GM10248 (cell line): ENCODE measurements at regions of chr12 and their contacts with region 1.

Region 1: DNA sequence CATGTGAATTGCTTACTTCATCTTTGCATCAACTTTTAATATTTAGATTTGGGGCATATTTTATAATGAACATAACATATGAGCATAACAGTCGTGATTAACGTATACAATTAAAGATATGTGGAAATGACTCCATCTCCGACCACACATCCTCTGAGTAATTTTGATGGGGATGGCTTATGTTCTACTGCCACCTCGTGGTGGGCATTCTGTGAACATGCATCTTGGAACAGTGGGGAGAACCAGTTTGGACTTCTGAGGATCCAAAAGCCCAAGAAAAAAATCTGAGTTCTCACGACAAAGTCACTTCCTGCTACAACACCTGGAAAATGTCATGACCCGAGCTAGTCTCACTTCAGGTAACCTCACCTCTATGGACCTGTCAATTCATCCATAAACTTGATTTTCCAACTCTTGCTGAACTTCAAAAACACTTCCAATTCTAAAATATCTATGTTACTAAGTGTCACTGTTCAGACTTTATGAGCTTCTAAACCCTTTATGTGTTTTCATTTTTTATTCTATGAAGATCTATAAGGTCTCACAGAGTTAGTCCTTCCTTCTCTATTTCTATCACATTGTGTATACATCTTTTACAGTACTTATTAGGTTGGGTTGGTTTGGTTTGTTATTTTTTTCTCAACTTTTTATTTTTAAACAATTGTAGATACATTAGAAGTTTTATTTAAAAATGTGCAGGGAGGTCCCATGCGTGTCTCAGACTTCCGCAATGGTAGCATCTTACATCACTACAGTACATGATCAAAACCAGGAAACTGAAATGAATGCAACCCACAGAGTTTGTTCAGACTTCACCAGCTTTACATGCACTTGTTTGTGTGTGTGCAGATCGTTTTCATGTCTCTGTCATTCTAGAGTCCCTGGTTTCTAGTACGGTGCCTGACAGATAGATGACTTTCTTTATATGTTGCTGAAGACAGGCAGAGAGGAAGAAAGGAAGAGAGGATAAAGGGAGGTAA is 38.2 kb upstream of the STAB2 start:
- DNase-seq: peak; percentile 49
- CTCF ChIP-seq: peak; percentile 82

Region 2: GRCh38 chr12:102879144-102879763 is 669.7 kb before region 1 on chr12:
- CTCF ChIA-PET with region 1: interaction called, 109 read pairs
- POLR2A ChIA-PET with region 1: no interaction called
- DNase-seq: peak; percentile 45
- CTCF ChIP-seq: peak; percentile 62

Region 3: DNA sequence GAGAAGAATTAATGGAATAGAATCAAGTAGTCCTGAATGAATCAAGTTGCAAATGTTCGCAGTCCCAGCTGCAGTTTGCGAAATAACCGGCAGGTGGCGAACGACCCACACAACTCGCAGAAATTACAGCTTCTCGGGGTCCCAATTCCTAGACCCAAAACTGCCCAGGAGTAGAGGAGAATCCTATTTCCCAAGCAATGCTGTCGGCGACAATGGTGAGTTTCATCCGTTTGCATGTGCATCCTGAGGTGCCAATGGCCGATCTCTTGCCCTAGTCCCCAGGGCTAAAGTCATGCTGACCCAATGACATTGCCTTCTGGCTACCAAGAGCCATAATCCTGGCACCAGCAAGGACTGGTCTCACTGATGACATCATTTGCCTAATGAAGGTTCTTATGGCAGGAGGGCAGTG is 600.0 kb before region 1 on chr12:
- CTCF ChIA-PET with region 1: interaction called, 68 read pairs
- POLR2A ChIA-PET with region 1: no interaction called
- DNase-seq: peak; percentile 38
- CTCF ChIP-seq: peak; percentile 91

Region 4: GRCh38 chr12:103313894-103314293 is 235.0 kb before region 1 on chr12:
- CTCF ChIA-PET with region 1: interaction called, 10 read pairs
- POLR2A ChIA-PET with region 1: no interaction called
- DNase-seq: peak; percentile 16
- CTCF ChIP-seq: no peak

Region 5: GRCh38 chr12:103523771-103524170 is 25.1 kb before region 1 on chr12:
- CTCF ChIA-PET with region 1: interaction called, 50 read pairs
- POLR2A ChIA-PET with region 1: no interaction called
- DNase-seq: no peak
- CTCF ChIP-seq: no peak

Region 6: DNA sequence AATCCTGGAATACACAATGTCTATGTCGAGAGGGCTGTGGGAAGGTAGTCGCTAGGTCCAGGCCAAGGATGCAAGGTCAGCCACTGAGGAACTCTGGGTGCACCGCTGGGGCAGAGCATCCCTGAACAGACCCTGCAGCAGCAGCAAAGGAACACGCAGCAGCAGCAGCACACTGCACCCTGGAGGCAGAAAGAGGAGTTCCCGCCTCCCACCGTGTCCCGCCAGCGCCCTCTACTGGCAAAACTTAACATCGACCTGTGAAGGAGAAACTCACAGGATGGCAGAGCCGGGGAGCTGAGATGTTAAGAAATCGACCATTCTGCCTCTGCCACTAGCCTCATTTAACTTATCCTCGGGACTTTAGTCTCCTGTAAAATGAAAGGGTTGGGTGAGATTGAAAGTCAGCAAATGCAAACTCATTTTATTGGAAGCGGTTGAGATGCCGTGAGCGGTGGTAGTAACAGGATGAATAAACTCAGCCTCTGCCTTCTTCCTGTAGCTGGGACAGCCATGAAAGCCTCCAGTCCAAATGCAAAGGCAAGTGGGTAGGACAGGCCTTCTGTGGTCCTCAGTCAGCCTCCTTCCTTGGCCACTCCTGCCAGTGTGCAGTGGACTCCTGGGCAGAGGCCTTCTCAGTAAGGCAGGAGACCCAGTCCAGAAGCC is 83.8 kb after region 1 on chr12:
- CTCF ChIA-PET with region 1: interaction called, 15 read pairs
- POLR2A ChIA-PET with region 1: no interaction called
- DNase-seq: peak; percentile 87
- CTCF ChIP-seq: peak; percentile 98